A549 (cell line): ENCODE measurements at regions of chr12 and their contacts with region 1.

Region 1: DNA sequence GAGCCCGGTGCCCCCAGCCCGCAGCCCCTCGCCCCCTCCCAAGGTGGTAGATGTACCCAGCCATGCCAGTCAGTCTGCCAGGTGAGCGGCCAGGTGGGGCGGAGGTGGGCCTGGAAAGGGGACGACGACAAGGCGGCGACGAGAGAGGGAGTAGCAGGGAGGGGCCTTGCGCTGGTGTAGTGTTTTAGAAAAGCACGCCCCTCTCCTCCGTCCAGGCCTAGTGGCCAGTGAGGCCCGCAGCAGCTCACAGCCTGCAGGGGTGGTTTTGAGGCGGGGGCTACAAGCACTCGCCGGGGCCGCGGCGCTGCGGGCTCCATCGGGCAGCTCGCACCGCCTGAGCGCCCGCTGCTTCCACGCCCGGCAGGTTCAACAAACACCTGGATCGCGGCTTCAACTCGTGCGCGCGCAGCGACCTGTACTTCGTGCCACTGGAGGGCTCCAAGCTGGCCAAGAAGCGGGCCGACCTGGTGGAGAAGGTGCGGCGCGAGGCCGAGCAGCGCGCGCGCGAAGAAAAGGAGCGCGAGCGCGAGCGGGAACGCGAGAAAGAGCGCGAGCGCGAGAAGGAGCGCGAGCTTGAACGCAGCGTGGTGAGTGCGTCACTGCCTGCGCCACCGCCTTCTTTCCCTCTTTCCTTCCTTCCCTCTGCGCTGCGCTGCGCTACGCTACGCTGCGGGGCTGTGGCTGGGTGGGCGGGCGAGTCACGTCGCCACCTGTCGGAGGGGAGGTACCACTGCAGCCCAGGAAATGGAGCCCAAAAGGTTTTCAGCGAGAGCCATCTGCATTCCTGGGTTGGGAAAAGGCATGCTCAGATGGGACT is 5.9 kb upstream of the RNU7-1 start:
- DNase-seq: peak; percentile 80 to 98
- ATAC-seq: peak; percentile 86 to 93
- H3K4me3 ChIP-seq: peak overlapping the region; percentile 49
- H3K27ac ChIP-seq: peak overlapping the region; percentile 81 to 92
- H3K4me1 ChIP-seq: peaks cover 45% of the 10 kb centered on the region
- CTCF ChIP-seq: peak; percentile 84
- EP300 ChIP-seq: no peak
- POLR2A ChIP-seq: peak; percentile 92
- RAD21 ChIP-seq: peak; percentile 37 to 40; a peak in 4 of 5 replicates

Region 2: DNA sequence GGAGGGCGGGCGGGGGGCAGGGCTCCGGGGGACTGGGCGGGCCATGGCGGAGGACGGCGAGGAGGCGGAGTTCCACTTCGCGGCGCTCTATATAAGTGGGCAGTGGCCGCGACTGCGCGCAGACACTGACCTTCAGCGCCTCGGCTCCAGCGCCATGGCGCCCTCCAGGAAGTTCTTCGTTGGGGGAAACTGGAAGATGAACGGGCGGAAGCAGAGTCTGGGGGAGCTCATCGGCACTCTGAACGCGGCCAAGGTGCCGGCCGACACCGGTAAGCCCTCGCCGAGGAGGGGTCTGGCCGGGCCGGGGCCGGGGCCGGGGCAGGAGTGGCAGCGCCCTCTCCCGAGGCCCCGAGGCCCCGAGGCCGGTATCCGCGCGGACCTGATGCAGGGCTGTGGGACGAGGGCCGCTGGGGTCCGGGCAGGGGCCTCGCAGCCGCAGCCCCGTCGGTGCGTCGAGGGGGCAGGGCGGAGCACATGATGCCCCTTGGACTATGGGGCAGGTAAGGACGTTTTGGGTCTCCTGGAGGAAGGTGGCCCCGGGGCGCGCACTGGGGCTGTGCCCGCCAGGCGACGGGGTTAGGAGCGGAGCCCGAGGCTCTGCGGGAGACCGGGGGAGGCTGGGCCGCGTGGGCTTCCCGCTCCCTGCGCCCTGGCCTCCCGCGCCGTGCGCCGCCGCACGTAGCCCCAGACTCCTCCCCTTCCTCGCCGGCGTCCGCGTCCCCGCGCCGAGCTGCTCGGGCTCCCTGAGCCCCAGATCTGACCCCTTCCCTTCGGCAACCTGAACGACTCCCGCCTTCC is 70.1 kb before region 1 on chr12 and contains the start of gene TPI1:
- CTCF ChIA-PET with region 1: interaction called, 183 read pairs
- POLR2A ChIA-PET with region 1: interaction called, 30 read pairs
- DNase-seq: peak; percentile 77 to 85
- ATAC-seq: peak; percentile 45 to 71
- H3K4me3 ChIP-seq: peak within 1 kb of the TSS; percentile 100
- H3K27ac ChIP-seq: peak within 1 kb of the TSS; percentile 97 to 99
- H3K4me1 ChIP-seq: peaks cover 42% of the 10 kb centered on the region
- CTCF ChIP-seq: no peak
- EP300 ChIP-seq: no peak
- POLR2A ChIP-seq: peak; percentile 99
- RAD21 ChIP-seq: no peak
- polyA plus RNA-seq, gene TPI1: 1,913 and 2,511 TPM in 2 replicates